IMR-90 (cell line): ENCODE measurements at regions of chr9 and their contacts with region 1.

Region 1: DNA sequence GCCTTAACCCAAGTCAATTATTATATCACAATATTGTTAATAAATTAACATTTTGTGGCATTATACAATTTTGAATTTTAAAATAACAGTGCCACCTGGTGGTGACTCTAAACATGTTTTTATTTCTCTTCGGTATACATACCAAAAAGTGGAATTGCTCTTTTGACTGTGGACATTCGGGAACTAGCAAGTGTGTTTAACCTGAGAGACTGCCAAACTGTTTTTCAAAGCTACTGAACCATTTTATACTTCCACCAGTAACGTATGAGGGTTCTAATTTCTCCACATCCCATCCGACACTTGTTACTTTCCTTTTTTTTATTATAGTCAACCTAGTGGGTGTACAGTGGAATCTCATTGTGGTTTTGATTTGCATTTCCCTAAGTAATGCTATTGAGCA is 18.3 kb upstream of the HSDL2 start:
- DNase-seq: peak; percentile 59
- ATAC-seq: peak; percentile 63
- H3K4me3 ChIP-seq: no peak overlapping the region
- H3K27ac ChIP-seq: no peak overlapping the region
- H3K4me1 ChIP-seq: no peaks in the 10 kb centered on the region; the same call in 1 of the 2 replicates
- H3K27me3 ChIP-seq: no peaks in the 10 kb centered on the region
- CTCF ChIP-seq: peak; percentile 55
- POLR2A ChIP-seq: no peak
- RAD21 ChIP-seq: peak; percentile 50

Region 2: GRCh38 chr9:111759762-111760639 is 601.6 kb before region 1 on chr9:
- CTCF ChIA-PET with region 1: interaction called, 3 read pairs
- POLR2A ChIA-PET with region 1: no interaction called
- dilution Hi-C with region 1: no loop called
- in situ Hi-C with region 1: loop called (anchors 5 kb)
- intact Hi-C with region 1: loop called (anchors 2 kb)
- DNase-seq: peak; percentile 91
- ATAC-seq: peak; percentile 95
- H3K4me3 ChIP-seq: no peak overlapping the region
- H3K27ac ChIP-seq: peak overlapping the region; percentile 24; the same call in 1 of the 2 replicates
- H3K4me1 ChIP-seq: peaks cover 3% of the 10 kb centered on the region; the same call in 1 of the 2 replicates
- H3K27me3 ChIP-seq: no peaks in the 10 kb centered on the region
- CTCF ChIP-seq: peak; percentile 83
- POLR2A ChIP-seq: no peak
- RAD21 ChIP-seq: peak; percentile 90

Region 3: GRCh38 chr9:112086627-112087026 is 275.0 kb before region 1 on chr9:
- CTCF ChIA-PET with region 1: interaction called, 21 read pairs
- POLR2A ChIA-PET with region 1: no interaction called
- dilution Hi-C with region 1: no loop called
- in situ Hi-C with region 1: loop called (anchors 5 kb)
- intact Hi-C with region 1: no loop called
- DNase-seq: peak; percentile 43
- ATAC-seq: no peak
- H3K4me3 ChIP-seq: no peak overlapping the region
- H3K27ac ChIP-seq: no peak overlapping the region
- H3K4me1 ChIP-seq: 0 out of 2 replicates have a peak, but pooled peaks cover 2% of the 10 kb centered on the region
- H3K27me3 ChIP-seq: no peaks in the 10 kb centered on the region
- CTCF ChIP-seq: peak; percentile 68
- POLR2A ChIP-seq: no peak
- RAD21 ChIP-seq: peak; percentile 74

Region 4: GRCh38 chr9:112091810-112092209 is 269.8 kb before region 1 on chr9:
- CTCF ChIA-PET with region 1: interaction called, 21 read pairs
- POLR2A ChIA-PET with region 1: no interaction called
- dilution Hi-C with region 1: no loop called
- in situ Hi-C with region 1: loop called (anchors 5 kb)
- intact Hi-C with region 1: loop called (anchors 1 kb)
- DNase-seq: peak; percentile 36
- ATAC-seq: peak; percentile 53
- H3K4me3 ChIP-seq: no peak overlapping the region
- H3K27ac ChIP-seq: no peak overlapping the region
- H3K4me1 ChIP-seq: no peaks in the 10 kb centered on the region
- H3K27me3 ChIP-seq: no peaks in the 10 kb centered on the region
- CTCF ChIP-seq: peak; percentile 51
- POLR2A ChIP-seq: no peak
- RAD21 ChIP-seq: peak; percentile 54

Region 5: GRCh38 chr9:112097712-112098688 is 263.6 kb before region 1 on chr9:
- CTCF ChIA-PET with region 1: interaction called, 7 read pairs
- POLR2A ChIA-PET with region 1: no interaction called
- dilution Hi-C with region 1: no loop called
- in situ Hi-C with region 1: loop called (anchors 5 kb)
- intact Hi-C with region 1: loop called (anchors 1 kb)
- DNase-seq: peak; percentile 77
- ATAC-seq: peak; percentile 95
- H3K4me3 ChIP-seq: no peak overlapping the region
- H3K27ac ChIP-seq: no peak overlapping the region
- H3K4me1 ChIP-seq: no peaks in the 10 kb centered on the region
- H3K27me3 ChIP-seq: no peaks in the 10 kb centered on the region
- CTCF ChIP-seq: peak; percentile 93
- POLR2A ChIP-seq: peak; percentile 31; the same call in 1 of the 2 replicates
- RAD21 ChIP-seq: peak; percentile 93

Region 6: GRCh38 chr9:112308588-112308987 is 53.0 kb before region 1 on chr9:
- CTCF ChIA-PET with region 1: no interaction called
- POLR2A ChIA-PET with region 1: no interaction called
- dilution Hi-C with region 1: no loop called
- in situ Hi-C with region 1: no loop called
- intact Hi-C with region 1: no loop called
- DNase-seq: peak; percentile 10
- ATAC-seq: no peak
- H3K4me3 ChIP-seq: no peak overlapping the region
- H3K27ac ChIP-seq: no peak overlapping the region
- H3K4me1 ChIP-seq: no peaks in the 10 kb centered on the region
- H3K27me3 ChIP-seq: no peaks in the 10 kb centered on the region
- CTCF ChIP-seq: no peak
- POLR2A ChIP-seq: no peak
- RAD21 ChIP-seq: no peak

Region 7: GRCh38 chr9:112348257-112349007 is 13.2 kb before region 1 on chr9:
- CTCF ChIA-PET with region 1: interaction called, 11 read pairs
- POLR2A ChIA-PET with region 1: no interaction called
- dilution Hi-C with region 1: no loop called
- in situ Hi-C with region 1: no loop called
- intact Hi-C with region 1: no loop called
- DNase-seq: peak; percentile 35
- ATAC-seq: peak; percentile 61
- H3K4me3 ChIP-seq: peak overlapping the region; percentile 58
- H3K27ac ChIP-seq: no peak overlapping the region
- H3K4me1 ChIP-seq: no peaks in the 10 kb centered on the region; the same call in 1 of the 2 replicates
- H3K27me3 ChIP-seq: no peaks in the 10 kb centered on the region
- CTCF ChIP-seq: no peak
- POLR2A ChIP-seq: no peak
- RAD21 ChIP-seq: no peak

Region 8: DNA sequence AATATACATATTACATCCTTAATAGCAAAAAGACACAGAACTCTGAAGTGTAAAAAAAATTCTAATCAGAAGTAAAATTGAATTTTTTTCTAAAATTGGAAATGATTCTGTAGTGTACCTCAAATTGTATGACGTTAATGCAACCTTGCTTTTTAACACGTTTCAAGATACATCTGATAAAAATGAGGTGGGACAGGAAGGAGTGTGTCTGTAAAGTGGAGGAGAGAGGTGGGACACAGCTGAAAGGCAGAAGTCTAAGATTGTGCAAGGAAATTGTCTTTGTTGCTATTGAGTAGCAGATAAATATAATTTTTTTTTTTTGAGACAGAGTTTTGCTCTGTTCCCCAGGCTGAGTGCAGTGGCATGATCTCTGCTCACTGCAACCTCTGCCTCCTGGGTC is 373.3 kb after region 1 on chr9:
- CTCF ChIA-PET with region 1: no interaction called
- POLR2A ChIA-PET with region 1: no interaction called
- dilution Hi-C with region 1: no loop called
- in situ Hi-C with region 1: no loop called
- intact Hi-C with region 1: no loop called
- DNase-seq: no peak
- ATAC-seq: no peak
- H3K4me3 ChIP-seq: no peak overlapping the region
- H3K27ac ChIP-seq: no peak overlapping the region
- H3K4me1 ChIP-seq: peaks cover 5% of the 10 kb centered on the region
- H3K27me3 ChIP-seq: peaks cover 5% of the 10 kb centered on the region
- CTCF ChIP-seq: no peak
- POLR2A ChIP-seq: no peak
- RAD21 ChIP-seq: no peak